Activated CD4-positive, alpha-beta T cell treated with anti-CD3 and anti-CD28 coated beads for 36 hours (primary cell): ENCODE measurements at regions of chr1 and their contacts with region 1.

Region 1: GRCh38 chr1:213921311-213921710 is 66.5 kb upstream of the PROX1 start:
- DNase-seq: no peak
- ATAC-seq: no peak
- H3K4me3 Mint-ChIP-seq: no peak overlapping the region
- H3K27ac Mint-ChIP-seq: no peak overlapping the region
- H3K4me1 Mint-ChIP-seq: no peaks in the 10 kb centered on the region
- H3K27me3 Mint-ChIP-seq: no peaks in the 10 kb centered on the region

Region 2: GRCh38 chr1:213883618-213884017 is 37.7 kb before region 1 on chr1:
- CTCF ChIA-PET with region 1: no interaction called
- POLR2A ChIA-PET with region 1: no interaction called
- intact Hi-C with region 1: no loop called
- DNase-seq: no peak
- ATAC-seq: no peak
- H3K4me3 Mint-ChIP-seq: no peak overlapping the region
- H3K27ac Mint-ChIP-seq: no peak overlapping the region
- H3K4me1 Mint-ChIP-seq: peaks cover 7% of the 10 kb centered on the region
- H3K27me3 Mint-ChIP-seq: no peaks in the 10 kb centered on the region

Region 3: DNA sequence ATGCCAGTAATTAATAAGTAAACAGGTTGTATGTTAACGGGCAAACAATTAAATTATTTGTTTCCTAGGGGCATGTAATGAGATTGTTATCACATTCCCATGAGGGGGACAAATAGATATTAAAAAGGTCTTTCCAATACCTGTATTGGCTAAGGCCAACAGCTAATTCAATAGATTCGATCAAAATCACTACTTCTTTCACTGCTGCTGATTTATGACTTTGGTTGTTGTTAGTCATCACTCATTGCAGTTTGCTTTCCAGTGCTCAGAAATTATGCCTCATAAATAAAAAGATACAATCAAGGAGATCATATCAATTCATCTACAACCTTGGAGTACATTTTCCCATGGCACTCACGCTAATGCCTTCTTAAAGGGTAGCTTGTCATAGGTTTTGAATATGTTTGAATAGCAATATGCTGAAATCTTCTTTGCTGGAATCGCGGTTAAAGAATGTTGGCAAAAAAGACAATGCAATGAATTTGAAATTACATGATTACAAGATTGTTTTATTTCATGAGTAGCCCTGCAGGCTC is 1735.7 kb after region 1 on chr1:
- CTCF ChIA-PET with region 1: no interaction called
- POLR2A ChIA-PET with region 1: no interaction called
- intact Hi-C with region 1: loop called in 1 of 2 experiments (anchors 5 kb)
- DNase-seq: no peak
- ATAC-seq: no peak
- H3K4me3 Mint-ChIP-seq: no peak overlapping the region
- H3K27ac Mint-ChIP-seq: no peak overlapping the region
- H3K4me1 Mint-ChIP-seq: no peaks in the 10 kb centered on the region
- H3K27me3 Mint-ChIP-seq: peaks cover 5% of the 10 kb centered on the region